ENCODE measurements at regions of chr14 and their contacts with region 1.

Region 1: DNA sequence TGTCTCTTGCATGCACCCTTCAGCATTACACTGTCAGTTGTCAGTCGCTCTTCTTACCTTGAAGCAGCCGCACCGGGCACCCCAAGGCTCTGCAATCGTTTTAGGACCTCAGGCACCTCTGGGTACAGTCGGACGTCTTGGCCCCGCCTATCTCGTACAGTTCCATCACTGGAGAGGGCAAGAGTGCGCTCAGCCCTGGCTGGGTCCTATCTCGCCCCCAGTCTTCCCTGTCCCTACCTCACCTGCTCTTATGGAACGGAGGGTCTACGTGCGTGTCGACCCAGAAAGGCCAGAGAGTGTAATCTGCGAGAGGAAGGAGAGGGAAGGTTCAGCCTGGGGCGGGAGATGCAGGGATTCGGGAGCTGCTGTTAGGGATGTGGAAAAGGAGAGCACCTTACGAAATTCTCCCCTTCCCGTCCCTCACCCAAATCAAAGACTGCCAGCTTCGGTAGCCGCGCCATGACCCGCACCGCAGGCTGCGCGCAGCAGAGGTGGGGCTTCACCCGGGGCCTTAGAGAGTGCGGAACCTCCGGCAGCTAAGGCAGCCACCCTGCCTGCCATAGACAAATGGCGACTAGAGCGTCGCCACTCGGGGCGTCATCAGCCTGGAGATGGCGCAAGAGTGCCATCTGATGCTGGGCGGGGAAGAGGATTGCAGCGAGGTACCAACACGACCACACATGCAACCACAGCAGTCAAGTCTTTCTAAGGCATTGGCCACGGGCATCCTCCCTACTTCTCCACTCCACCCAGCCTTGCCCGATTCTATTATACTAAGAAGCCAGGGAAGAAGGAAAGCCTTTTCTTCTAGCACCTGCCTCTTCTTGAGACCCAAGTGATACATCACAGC is at the start of gene MDP1:
- DNase-seq: peak; percentile 95
- ATAC-seq: peak; percentile 81
- H3K4me3 ChIP-seq: peak within 1 kb of the TSS; percentile 67 to 98 (median 81)
- H3K27ac ChIP-seq: peak within 1 kb of the TSS; percentile 72
- H3K4me1 ChIP-seq: peaks cover 39% of the 10 kb centered on the region
- H3K27me3 ChIP-seq: no peaks in the 10 kb centered on the region; a peak in 1 of 5 replicates
- CTCF ChIP-seq: peak; percentile 100
- EP300 ChIP-seq: peak in 1 of 2 experiments; percentile 74; a peak in 3 of 4 replicates
- POLR2A ChIP-seq: peak in 1 of 2 experiments; percentile 97; a peak in 2 of 4 replicates
- RAD21 ChIP-seq: peak; percentile 96
- total RNA-seq, gene MDP1: 48.7 and 66.0 TPM in 2 replicates

Region 2: GRCh38 chr14:24108336-24108874 is 107.3 kb before region 1 on chr14:
- CTCF ChIA-PET with region 1: no interaction called
- POLR2A ChIA-PET with region 1: interaction called, 67 read pairs
- in situ Hi-C with region 1: no loop called
- intact Hi-C with region 1: no loop called
- DNase-seq: no peak
- ATAC-seq: no peak
- H3K4me3 ChIP-seq: no peak overlapping the region
- H3K27ac ChIP-seq: no peak overlapping the region
- H3K4me1 ChIP-seq: peaks cover 60% of the 10 kb centered on the region
- H3K27me3 ChIP-seq: no peaks in the 10 kb centered on the region
- CTCF ChIP-seq: no peak
- EP300 ChIP-seq: no peak
- POLR2A ChIP-seq: no peak
- RAD21 ChIP-seq: no peak

Region 3: GRCh38 chr14:24141097-24141880 is 74.4 kb before region 1 on chr14 and contains the start of gene EMC9:
- CTCF ChIA-PET with region 1: no interaction called
- POLR2A ChIA-PET with region 1: interaction called, 63 read pairs
- in situ Hi-C with region 1: no loop called
- intact Hi-C with region 1: loop called (anchors 1 kb)
- DNase-seq: peak; percentile 100
- ATAC-seq: peak; percentile 88
- H3K4me3 ChIP-seq: peak within 1 kb of the TSS; percentile 83 to 99 (median 95)
- H3K27ac ChIP-seq: peak within 1 kb of the TSS; percentile 86
- H3K4me1 ChIP-seq: peaks cover 77% of the 10 kb centered on the region
- H3K27me3 ChIP-seq: peaks cover 0 to 3% of the 10 kb centered on the region in 2 experiments; a peak in 1 of 5 replicates
- CTCF ChIP-seq: peak; percentile 53
- EP300 ChIP-seq: peak in 1 of 2 experiments; percentile 70; a peak in 2 of 4 replicates
- POLR2A ChIP-seq: peak in 1 of 2 experiments; percentile 88; a peak in 2 of 4 replicates
- RAD21 ChIP-seq: peak; percentile 84
- total RNA-seq, gene EMC9: 71.2 and 78.7 TPM in 2 replicates

Region 4: GRCh38 chr14:24188251-24189058 is 27.3 kb before region 1 on chr14 and contains the start of gene IPO4:
- CTCF ChIA-PET with region 1: no interaction called
- POLR2A ChIA-PET with region 1: interaction called, 230 read pairs
- in situ Hi-C with region 1: no loop called
- intact Hi-C with region 1: no loop called
- DNase-seq: peak; percentile 100
- ATAC-seq: peak; percentile 88
- H3K4me3 ChIP-seq: peak within 1 kb of the TSS; percentile 70 to 92 (median 77)
- H3K27ac ChIP-seq: peak within 1 kb of the TSS; percentile 64
- H3K4me1 ChIP-seq: peaks cover 42% of the 10 kb centered on the region
- H3K27me3 ChIP-seq: no peaks in the 10 kb centered on the region
- CTCF ChIP-seq: peak; percentile 49
- EP300 ChIP-seq: peak; percentile 85 to 87; a peak in 3 of 4 replicates
- POLR2A ChIP-seq: peak in 1 of 2 experiments; percentile 98; a peak in 2 of 4 replicates
- RAD21 ChIP-seq: peak; percentile 77
- total RNA-seq, gene IPO4: 149 and 179 TPM in 2 replicates

Region 5: GRCh38 chr14:24232121-24232644 is 16.5 kb after region 1 on chr14 and contains the start of gene NEDD8:
- CTCF ChIA-PET with region 1: interaction called, 7 read pairs
- POLR2A ChIA-PET with region 1: interaction called, 76 read pairs
- in situ Hi-C with region 1: no loop called
- intact Hi-C with region 1: loop called (anchors 1 kb)
- DNase-seq: peak; percentile 99
- ATAC-seq: peak; percentile 85
- H3K4me3 ChIP-seq: peak within 1 kb of the TSS; percentile 83 to 91 (median 85)
- H3K27ac ChIP-seq: peak within 1 kb of the TSS; percentile 84
- H3K4me1 ChIP-seq: peaks cover 47% of the 10 kb centered on the region
- H3K27me3 ChIP-seq: peaks cover 0 to 4% of the 10 kb centered on the region in 2 experiments; a peak in 1 of 5 replicates
- CTCF ChIP-seq: no peak; the same call in none of the 2 replicates
- EP300 ChIP-seq: no peak; a peak in 1 of 4 replicates
- POLR2A ChIP-seq: peak in 1 of 2 experiments; percentile 63; a peak in 2 of 4 replicates
- RAD21 ChIP-seq: no peak; the same call in 1 of the 2 replicates
- total RNA-seq, gene NEDD8: 713 and 818 TPM in 2 replicates

Region 6: GRCh38 chr14:24299255-24300195 is 83.8 kb after region 1 on chr14 and contains the starts of genes DHRS1 and NOP9:
- CTCF ChIA-PET with region 1: interaction called, 44 read pairs
- POLR2A ChIA-PET with region 1: interaction called, 88 read pairs
- in situ Hi-C with region 1: no loop called
- intact Hi-C with region 1: loop called (anchors 1 kb)
- DNase-seq: peak; percentile 93
- ATAC-seq: peak; percentile 80
- H3K4me3 ChIP-seq: peak within 1 kb of the TSS; percentile 79 to 98 (median 89)
- H3K27ac ChIP-seq: peak within 1 kb of the TSS; percentile 83
- H3K4me1 ChIP-seq: peaks cover 45% of the 10 kb centered on the region
- H3K27me3 ChIP-seq: no peaks in the 10 kb centered on the region; a peak in 1 of 5 replicates
- CTCF ChIP-seq: peak; percentile 53
- EP300 ChIP-seq: peak; percentile 63 to 81; a peak in 3 of 4 replicates
- POLR2A ChIP-seq: peak in 1 of 2 experiments; percentile 88; a peak in 2 of 4 replicates
- RAD21 ChIP-seq: peak; percentile 54; the same call in 1 of the 2 replicates
- total RNA-seq, gene DHRS1: 46.3 and 60.8 TPM in 2 replicates
- total RNA-seq, gene NOP9: 61.6 and 64.5 TPM in 2 replicates